K562 (cell line): ENCODE measurements at regions of chr3 and their contacts with region 1.

Region 1: GRCh38 chr3:55974421-55975165 is 487.5 kb upstream of the WNT5A start:
- DNase-seq: no peak
- ATAC-seq: no peak
- H3K4me3 ChIP-seq: no peak overlapping the region
- H3K27ac ChIP-seq: no peak overlapping the region
- H3K4me1 ChIP-seq: no peaks in the 10 kb centered on the region
- H3K27me3 ChIP-seq: no peaks in the 10 kb centered on the region; a peak in 1 of 5 replicates
- CTCF ChIP-seq: no peak
- EP300 ChIP-seq: no peak
- POLR2A ChIP-seq: no peak
- RAD21 ChIP-seq: no peak

Region 2: DNA sequence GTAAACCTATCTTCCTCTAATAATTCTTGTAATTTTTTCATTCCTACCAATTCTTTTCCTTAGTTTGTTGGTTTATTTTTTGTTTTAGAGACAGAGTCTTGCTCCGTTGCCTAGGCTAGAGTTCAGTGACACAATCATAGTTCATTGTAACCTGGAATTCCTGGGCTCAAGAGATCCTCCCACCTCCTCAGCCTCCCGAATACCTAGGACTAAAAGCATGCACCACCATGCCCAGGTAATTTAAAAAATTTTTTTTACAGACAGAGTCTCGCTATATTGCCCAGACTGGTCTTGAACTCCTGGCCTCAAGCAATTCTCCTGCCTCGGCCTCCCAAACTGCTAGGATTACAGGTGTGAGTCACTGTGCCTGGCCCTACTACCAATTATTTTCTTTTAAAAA is 273.4 kb after region 1 on chr3:
- CTCF ChIA-PET with region 1: no interaction called
- POLR2A ChIA-PET with region 1: no interaction called
- in situ Hi-C with region 1: no loop called
- intact Hi-C with region 1: no loop called
- DNase-seq: no peak
- ATAC-seq: no peak
- H3K4me3 ChIP-seq: no peak overlapping the region
- H3K27ac ChIP-seq: no peak overlapping the region
- H3K4me1 ChIP-seq: no peaks in the 10 kb centered on the region
- H3K27me3 ChIP-seq: no peaks in the 10 kb centered on the region
- CTCF ChIP-seq: no peak
- EP300 ChIP-seq: no peak
- POLR2A ChIP-seq: no peak
- RAD21 ChIP-seq: no peak

Region 3: GRCh38 chr3:56593455-56594158 is 619.0 kb after region 1 on chr3:
- CTCF ChIA-PET with region 1: no interaction called
- POLR2A ChIA-PET with region 1: no interaction called
- in situ Hi-C with region 1: loop called (anchors 5 kb)
- intact Hi-C with region 1: no loop called
- DNase-seq: no peak
- ATAC-seq: no peak
- H3K4me3 ChIP-seq: no peak overlapping the region
- H3K27ac ChIP-seq: no peak overlapping the region
- H3K4me1 ChIP-seq: no peaks in the 10 kb centered on the region
- H3K27me3 ChIP-seq: no peaks in the 10 kb centered on the region
- CTCF ChIP-seq: no peak
- EP300 ChIP-seq: no peak
- POLR2A ChIP-seq: no peak
- RAD21 ChIP-seq: no peak